ENCODE measurements at regions of chr20 and their contacts with region 1.

Region 1: GRCh38 chr20:49982346-49983122 is at the start of gene SNAI1:
- DNase-seq: peak; percentile 66
- ATAC-seq: peak; percentile 83
- H3K4me3 ChIP-seq: peak within 1 kb of the TSS; percentile 69 to 100
- H3K27ac ChIP-seq: peak within 1 kb of the TSS; percentile 86
- H3K4me1 ChIP-seq: peaks cover 12 to 62% of the 10 kb centered on the region in 2 experiments
- H3K27me3 ChIP-seq: no peaks in the 10 kb centered on the region
- CTCF ChIP-seq: peak; percentile 35 to 62 (median 56); a peak in 5 of 6 replicates
- POLR2A ChIP-seq: peak; percentile 99
- RAD21 ChIP-seq: peak; percentile 41
- total RNA-seq, gene SNAI1: 13.4 TPM

Region 2: DNA sequence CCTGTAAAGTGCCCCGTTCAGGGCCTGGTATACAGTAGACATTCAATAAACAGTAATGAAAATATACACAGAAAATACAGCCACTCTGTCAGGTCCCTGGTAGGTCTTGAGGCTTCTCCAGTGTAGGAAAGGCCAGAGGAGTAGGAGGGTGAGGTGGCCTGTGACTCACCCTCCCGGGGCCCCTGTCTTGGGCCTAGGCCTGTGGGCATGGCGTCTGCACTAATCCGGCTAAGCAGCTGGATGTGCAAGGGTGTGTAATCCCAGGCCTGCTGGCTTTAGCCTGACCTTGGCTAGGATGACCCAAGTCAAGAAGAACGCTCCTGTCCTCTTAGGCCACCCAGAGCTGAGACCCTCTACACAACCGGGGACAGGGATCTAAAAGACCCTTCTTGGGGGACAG is 585.0 kb before region 1 on chr20:
- CTCF ChIA-PET with region 1: no interaction called
- POLR2A ChIA-PET with region 1: no interaction called
- RAD21 ChIA-PET with region 1: no interaction called
- intact Hi-C with region 1: no loop called
- DNase-seq: no peak
- ATAC-seq: peak; percentile 44
- H3K4me3 ChIP-seq: no peak overlapping the region
- H3K27ac ChIP-seq: no peak overlapping the region
- H3K4me1 ChIP-seq: peaks cover 2 to 14% of the 10 kb centered on the region in 2 experiments; a peak in 1 of 4 replicates
- H3K27me3 ChIP-seq: peaks cover 10% of the 10 kb centered on the region; the same call in 1 of the 2 replicates
- CTCF ChIP-seq: no peak
- POLR2A ChIP-seq: no peak
- RAD21 ChIP-seq: no peak

Region 3: DNA sequence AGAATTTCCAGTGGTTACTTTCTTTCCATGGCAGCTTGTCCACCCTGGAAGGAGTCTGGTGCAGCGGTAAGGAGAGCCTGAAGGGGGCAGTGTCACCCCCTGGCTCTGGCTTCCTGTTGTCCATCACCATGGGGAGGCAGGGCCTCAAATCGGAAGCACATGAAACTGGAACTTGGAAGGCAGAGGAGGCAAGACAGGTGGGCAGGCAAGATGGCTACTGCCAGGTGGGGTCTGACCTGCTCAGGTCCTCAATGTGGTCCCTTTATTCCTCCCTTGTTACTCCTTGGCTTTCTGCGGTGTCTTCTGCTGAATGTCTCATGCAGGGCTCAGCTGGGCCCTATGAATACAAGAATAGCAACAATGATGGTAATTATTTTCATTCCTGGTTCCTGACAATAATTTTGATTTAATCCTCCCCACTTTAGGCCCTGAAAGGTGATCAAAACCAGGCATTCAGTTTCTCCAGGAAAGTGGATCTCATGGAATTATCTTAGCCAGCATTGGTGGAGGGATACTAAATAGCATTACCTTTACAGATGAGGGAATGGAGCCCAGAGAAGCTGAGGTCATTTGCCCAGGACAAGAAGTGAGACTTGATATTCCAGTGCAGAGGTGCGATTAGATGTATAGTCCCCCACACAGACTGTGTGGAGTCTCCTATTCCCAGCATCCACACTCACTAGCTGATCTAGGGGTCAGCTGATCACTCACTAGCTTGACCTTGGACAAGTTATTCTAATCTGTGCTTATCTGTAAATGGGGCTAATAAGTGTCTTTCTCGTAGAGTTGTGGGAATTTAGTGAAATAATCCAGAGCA is 17.4 kb before region 1 on chr20:
- CTCF ChIA-PET with region 1: interaction called, 14 read pairs
- POLR2A ChIA-PET with region 1: no interaction called
- RAD21 ChIA-PET with region 1: no interaction called
- intact Hi-C with region 1: no loop called
- DNase-seq: peak; percentile 54
- ATAC-seq: peak; percentile 97
- H3K4me3 ChIP-seq: no peak overlapping the region
- H3K27ac ChIP-seq: no peak overlapping the region
- H3K4me1 ChIP-seq: peaks cover 6 to 41% of the 10 kb centered on the region in 2 experiments; a peak in 3 of 4 replicates
- H3K27me3 ChIP-seq: no peaks in the 10 kb centered on the region
- CTCF ChIP-seq: peak; percentile 59 to 99 (median 95); a peak in 5 of 6 replicates
- POLR2A ChIP-seq: no peak
- RAD21 ChIP-seq: peak; percentile 43

Region 4: GRCh38 chr20:50085452-50086365 is 103.2 kb after region 1 on chr20:
- CTCF ChIA-PET with region 1: interaction called, 4 read pairs
- POLR2A ChIA-PET with region 1: no interaction called
- RAD21 ChIA-PET with region 1: no interaction called
- intact Hi-C with region 1: loop called (anchors 1 kb)
- DNase-seq: peak; percentile 22
- ATAC-seq: peak; percentile 84
- H3K4me3 ChIP-seq: no peak overlapping the region
- H3K27ac ChIP-seq: peak overlapping the region; percentile 42
- H3K4me1 ChIP-seq: peaks cover 11 to 29% of the 10 kb centered on the region in 2 experiments
- H3K27me3 ChIP-seq: no peaks in the 10 kb centered on the region
- CTCF ChIP-seq: peak; percentile 45 to 95 (median 79); a peak in 5 of 6 replicates
- POLR2A ChIP-seq: no peak
- RAD21 ChIP-seq: peak; percentile 65

Region 5: DNA sequence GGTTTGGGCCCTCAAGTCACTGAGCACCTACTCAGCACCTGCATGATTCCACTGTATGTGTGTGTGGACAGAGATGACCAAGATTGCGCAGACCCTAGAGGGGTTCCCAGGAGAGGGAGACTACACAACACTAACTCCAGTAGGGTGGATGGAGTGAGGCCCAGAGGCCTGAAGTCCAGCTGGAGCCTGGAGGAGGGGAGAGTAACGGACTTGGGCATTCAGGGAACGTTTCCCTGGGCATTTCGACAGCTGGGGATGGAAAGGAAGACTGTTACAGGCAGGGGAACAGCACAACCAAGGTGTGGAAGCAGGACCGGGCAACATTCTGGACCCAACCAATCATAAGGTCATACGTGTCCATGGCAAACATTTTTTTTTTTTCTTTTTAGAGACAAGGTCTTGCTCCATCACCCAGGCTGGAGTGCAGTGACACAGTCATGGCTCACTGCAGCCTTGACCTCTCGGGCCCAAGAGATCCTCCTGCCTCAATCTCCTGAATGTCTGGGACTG is 197.0 kb after region 1 on chr20:
- CTCF ChIA-PET with region 1: interaction called, 14 read pairs
- POLR2A ChIA-PET with region 1: no interaction called
- RAD21 ChIA-PET with region 1: interaction called in 1 of 2 experiments, 3 read pairs
- intact Hi-C with region 1: no loop called
- DNase-seq: no peak
- ATAC-seq: peak; percentile 67
- H3K4me3 ChIP-seq: no peak overlapping the region
- H3K27ac ChIP-seq: no peak overlapping the region
- H3K4me1 ChIP-seq: peaks cover 0 to 7% of the 10 kb centered on the region in 2 experiments; a peak in 2 of 4 replicates
- H3K27me3 ChIP-seq: no peaks in the 10 kb centered on the region
- CTCF ChIP-seq: no peak
- POLR2A ChIP-seq: no peak
- RAD21 ChIP-seq: no peak

Region 6: DNA sequence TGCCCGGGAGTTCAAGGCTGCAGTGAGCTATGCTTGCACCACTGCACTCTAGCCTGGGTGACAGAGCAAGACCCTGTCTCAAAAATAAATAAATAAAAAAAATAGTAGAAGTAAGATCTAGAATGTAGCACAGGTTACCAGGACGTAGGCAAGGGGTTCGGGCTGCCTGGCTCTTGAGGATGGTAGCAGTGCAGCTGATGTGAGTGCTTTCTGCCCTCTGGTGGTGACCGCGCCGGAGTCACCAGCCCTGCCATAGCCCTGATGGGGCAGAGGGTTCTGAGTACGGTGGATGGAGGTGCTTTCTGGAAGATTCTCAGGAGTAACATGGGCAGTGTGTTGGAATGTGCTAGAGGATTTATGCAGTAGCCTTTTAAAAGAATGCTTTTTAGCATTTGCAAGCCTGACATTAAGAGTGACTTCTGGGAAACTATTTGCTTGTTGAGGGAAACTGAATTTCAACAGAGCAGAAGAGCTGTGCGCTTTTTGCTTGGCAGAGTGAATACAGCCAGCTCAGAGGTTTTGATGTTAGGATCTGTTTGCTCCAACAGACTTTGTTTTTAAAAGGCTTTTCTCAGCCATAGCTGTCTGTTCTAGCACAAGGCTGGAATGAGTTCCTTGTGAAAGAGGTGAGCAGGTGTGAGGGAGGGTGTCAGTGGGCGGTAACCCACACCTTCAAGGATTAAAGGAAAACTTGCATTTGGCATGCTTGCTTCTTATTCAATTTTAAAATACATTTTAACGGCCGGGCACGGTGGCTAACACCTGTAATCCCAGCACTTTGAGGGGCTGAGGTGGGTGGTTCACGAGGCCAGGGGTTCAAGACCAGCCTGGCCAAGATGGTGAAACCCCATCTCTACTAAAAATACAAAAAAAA is 593.5 kb after region 1 on chr20:
- CTCF ChIA-PET with region 1: no interaction called
- POLR2A ChIA-PET with region 1: no interaction called
- RAD21 ChIA-PET with region 1: no interaction called
- intact Hi-C with region 1: loop called (anchors 10 kb)
- DNase-seq: peak; percentile 22
- ATAC-seq: peak; percentile 92
- H3K4me3 ChIP-seq: no peak overlapping the region
- H3K27ac ChIP-seq: no peak overlapping the region
- H3K4me1 ChIP-seq: peaks cover 6 to 18% of the 10 kb centered on the region in 2 experiments; a peak in 2 of 4 replicates
- H3K27me3 ChIP-seq: no peaks in the 10 kb centered on the region
- CTCF ChIP-seq: peak; percentile 69 to 82 (median 78)
- POLR2A ChIP-seq: no peak
- RAD21 ChIP-seq: peak; percentile 85

Measured in HCT116 (cell line).